Esophagus muscularis mucosa (tissue), 4 donors: ENCODE measurements at regions of chr13 and their contacts with region 1.

Region 1: GRCh38 chr13:76886292-76887075 is at the start of gene KCTD12:
- DNase-seq: peak; percentile 98
- H3K4me3 ChIP-seq: peak within 1 kb of the TSS; percentile 83 to 95 (median 89)
- H3K27ac ChIP-seq: peak within 1 kb of the TSS; percentile 90 to 97 (median 94)
- H3K4me1 ChIP-seq: peaks cover 5 to 47% (median 41%) of the 10 kb centered on the region in 4 donors
- H3K27me3 ChIP-seq: no peaks in the 10 kb centered on the region
- CTCF ChIP-seq: peak; percentile 33 to 45 (median 41)
- EP300 ChIP-seq: no peak
- POLR2A ChIP-seq: peak; percentile 54
- total RNA-seq, gene KCTD12: 112 to 169 (median 148) TPM

Region 2: GRCh38 chr13:76667551-76667950 is 218.9 kb before region 1 on chr13:
- intact Hi-C with region 1: loop called (anchors 5 kb)
- DNase-seq: no peak
- H3K4me3 ChIP-seq: no peak overlapping the region
- H3K27ac ChIP-seq: no peak overlapping the region
- H3K4me1 ChIP-seq: peaks cover 0 to 24% (median 13%) of the 10 kb centered on the region in 4 donors
- H3K27me3 ChIP-seq: no peaks in the 10 kb centered on the region
- CTCF ChIP-seq: peak; percentile 29 to 42 (median 30)
- EP300 ChIP-seq: no peak
- POLR2A ChIP-seq: no peak